ENCODE measurements at regions of chr10 and their contacts with region 1.

Region 1: GRCh38 chr10:63083904-63084689 is 49.0 kb upstream of the NRBF2 start:
- DNase-seq: peak; percentile 36
- H3K4me3 Mint-ChIP-seq: no peak overlapping the region
- H3K27ac Mint-ChIP-seq: no peak overlapping the region
- H3K4me1 Mint-ChIP-seq: no peaks in the 10 kb centered on the region
- H3K27me3 Mint-ChIP-seq: peaks cover 19% of the 10 kb centered on the region
- CTCF ChIP-seq: peak; percentile 68

Region 2: DNA sequence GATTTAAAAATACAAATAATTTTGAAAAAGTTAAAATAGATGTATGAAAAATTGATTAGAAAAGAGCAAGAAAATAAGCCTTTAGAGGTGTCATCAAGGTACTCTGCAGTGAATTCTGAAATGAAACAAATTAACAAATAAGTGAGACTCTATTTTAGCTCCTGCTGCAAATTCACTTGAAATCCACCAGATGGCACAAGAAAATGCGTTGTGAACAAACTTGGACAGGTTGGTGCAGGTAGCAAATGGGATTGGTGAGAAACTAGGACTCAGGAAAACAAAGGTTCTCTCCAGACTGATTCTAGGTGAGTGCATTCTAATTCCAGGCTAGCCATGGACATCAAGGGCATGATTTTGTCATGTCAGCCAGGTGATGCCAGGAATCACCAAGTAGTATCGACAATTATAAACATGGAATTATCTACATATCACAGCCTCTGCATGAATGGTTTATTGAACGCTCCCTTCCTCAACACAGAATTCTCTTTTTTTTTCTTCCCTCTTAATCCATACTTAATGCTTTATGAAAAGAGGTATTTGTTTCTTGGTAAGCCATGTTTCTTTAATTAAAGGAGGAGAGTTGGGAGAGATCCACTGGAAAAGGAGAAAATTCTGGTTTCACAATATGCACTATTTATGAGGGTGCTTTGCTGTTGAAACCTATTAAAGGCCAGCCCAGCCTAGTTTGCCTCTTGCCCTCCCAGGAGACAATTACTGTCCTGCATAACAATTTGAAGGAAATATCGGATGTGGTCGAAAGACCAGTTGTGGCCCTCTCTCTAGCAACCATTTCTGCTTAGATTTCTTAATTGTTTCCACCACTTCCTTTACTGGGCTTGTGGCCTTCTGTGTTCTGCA is 591.9 kb before region 1 on chr10:
- CTCF ChIA-PET with region 1: interaction called, 3 read pairs
- intact Hi-C with region 1: loop called (anchors 5 kb)
- DNase-seq: peak; percentile 33
- H3K4me3 Mint-ChIP-seq: no peak overlapping the region
- H3K27ac Mint-ChIP-seq: no peak overlapping the region
- H3K4me1 Mint-ChIP-seq: no peaks in the 10 kb centered on the region
- H3K27me3 Mint-ChIP-seq: no peaks in the 10 kb centered on the region
- CTCF ChIP-seq: peak; percentile 57

Region 3: DNA sequence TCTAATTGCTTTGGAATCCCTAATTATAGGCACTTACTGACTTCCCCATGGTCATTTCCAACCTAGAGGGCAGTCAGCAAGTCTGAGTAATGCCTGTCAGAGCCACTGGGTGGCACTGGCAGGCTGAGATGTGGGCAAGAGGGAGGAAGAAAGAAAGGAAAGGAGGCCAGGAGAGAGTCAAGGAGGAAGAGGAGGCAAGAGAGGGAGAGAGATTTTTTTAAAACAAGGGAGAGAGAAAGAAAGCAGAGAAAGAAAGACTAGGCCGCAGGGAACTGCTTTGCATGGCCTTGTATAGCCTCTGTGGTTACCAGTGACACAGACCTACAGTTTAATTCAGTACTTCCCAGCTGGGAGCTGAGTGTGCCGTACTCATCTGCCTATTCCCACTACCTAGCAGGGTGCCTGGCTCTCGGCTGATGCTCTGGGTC is 490.0 kb before region 1 on chr10:
- CTCF ChIA-PET with region 1: interaction called, 13 read pairs
- intact Hi-C with region 1: loop called (anchors 2 kb)
- DNase-seq: peak; percentile 77
- H3K4me3 Mint-ChIP-seq: no peak overlapping the region
- H3K27ac Mint-ChIP-seq: no peak overlapping the region
- H3K4me1 Mint-ChIP-seq: no peaks in the 10 kb centered on the region
- H3K27me3 Mint-ChIP-seq: no peaks in the 10 kb centered on the region
- CTCF ChIP-seq: peak; percentile 94

Region 4: GRCh38 chr10:62610649-62611229 is 473.4 kb before region 1 on chr10:
- CTCF ChIA-PET with region 1: interaction called, 6 read pairs
- intact Hi-C with region 1: loop called (anchors 5 kb)
- DNase-seq: peak; percentile 82
- H3K4me3 Mint-ChIP-seq: no peak overlapping the region
- H3K27ac Mint-ChIP-seq: no peak overlapping the region
- H3K4me1 Mint-ChIP-seq: no peaks in the 10 kb centered on the region
- H3K27me3 Mint-ChIP-seq: no peaks in the 10 kb centered on the region
- CTCF ChIP-seq: peak; percentile 94

Region 5: DNA sequence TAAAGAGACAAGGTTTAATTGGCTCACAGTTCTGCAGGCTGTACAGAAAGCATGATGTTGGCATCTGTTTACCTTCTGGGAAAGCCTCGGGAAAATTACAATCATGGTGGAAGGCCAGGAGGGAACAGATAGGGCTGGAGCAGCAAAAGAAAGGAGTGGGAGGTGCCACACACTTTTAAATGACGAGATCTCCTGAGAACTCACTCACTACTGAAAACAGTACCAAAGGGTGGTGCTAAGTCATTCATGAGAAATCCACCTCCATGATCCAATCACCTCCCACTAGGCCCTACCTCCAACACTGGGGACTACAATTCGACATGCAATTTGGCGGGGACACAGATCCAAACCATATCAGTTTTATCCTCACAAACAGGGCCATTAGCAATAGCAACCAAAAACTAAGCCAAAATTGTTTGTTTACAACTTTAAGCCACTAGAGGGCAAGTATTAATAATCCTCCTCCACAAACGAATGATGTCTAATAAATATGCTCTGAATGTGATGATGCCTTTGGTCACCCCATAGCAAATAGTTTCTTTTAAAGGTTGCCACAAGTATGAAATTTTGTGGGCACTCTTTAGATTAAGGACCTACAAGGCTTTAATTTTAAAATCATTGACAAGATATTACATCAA is 80.2 kb before region 1 on chr10:
- CTCF ChIA-PET with region 1: no interaction called
- intact Hi-C with region 1: loop called (anchors 2 kb)
- DNase-seq: no peak
- H3K4me3 Mint-ChIP-seq: no peak overlapping the region
- H3K27ac Mint-ChIP-seq: no peak overlapping the region
- H3K4me1 Mint-ChIP-seq: no peaks in the 10 kb centered on the region
- H3K27me3 Mint-ChIP-seq: peaks cover 14% of the 10 kb centered on the region
- CTCF ChIP-seq: peak; percentile 30

Region 6: GRCh38 chr10:63125436-63125835 is 41.3 kb after region 1 on chr10:
- CTCF ChIA-PET with region 1: no interaction called
- intact Hi-C with region 1: no loop called
- DNase-seq: no peak
- H3K4me3 Mint-ChIP-seq: no peak overlapping the region
- H3K27ac Mint-ChIP-seq: no peak overlapping the region
- H3K4me1 Mint-ChIP-seq: no peaks in the 10 kb centered on the region
- H3K27me3 Mint-ChIP-seq: no peaks in the 10 kb centered on the region
- CTCF ChIP-seq: no peak

Measured in Calu3 (cell line).